ENCODE measurements at regions of chr2 and their contacts with region 1.

Region 1: DNA sequence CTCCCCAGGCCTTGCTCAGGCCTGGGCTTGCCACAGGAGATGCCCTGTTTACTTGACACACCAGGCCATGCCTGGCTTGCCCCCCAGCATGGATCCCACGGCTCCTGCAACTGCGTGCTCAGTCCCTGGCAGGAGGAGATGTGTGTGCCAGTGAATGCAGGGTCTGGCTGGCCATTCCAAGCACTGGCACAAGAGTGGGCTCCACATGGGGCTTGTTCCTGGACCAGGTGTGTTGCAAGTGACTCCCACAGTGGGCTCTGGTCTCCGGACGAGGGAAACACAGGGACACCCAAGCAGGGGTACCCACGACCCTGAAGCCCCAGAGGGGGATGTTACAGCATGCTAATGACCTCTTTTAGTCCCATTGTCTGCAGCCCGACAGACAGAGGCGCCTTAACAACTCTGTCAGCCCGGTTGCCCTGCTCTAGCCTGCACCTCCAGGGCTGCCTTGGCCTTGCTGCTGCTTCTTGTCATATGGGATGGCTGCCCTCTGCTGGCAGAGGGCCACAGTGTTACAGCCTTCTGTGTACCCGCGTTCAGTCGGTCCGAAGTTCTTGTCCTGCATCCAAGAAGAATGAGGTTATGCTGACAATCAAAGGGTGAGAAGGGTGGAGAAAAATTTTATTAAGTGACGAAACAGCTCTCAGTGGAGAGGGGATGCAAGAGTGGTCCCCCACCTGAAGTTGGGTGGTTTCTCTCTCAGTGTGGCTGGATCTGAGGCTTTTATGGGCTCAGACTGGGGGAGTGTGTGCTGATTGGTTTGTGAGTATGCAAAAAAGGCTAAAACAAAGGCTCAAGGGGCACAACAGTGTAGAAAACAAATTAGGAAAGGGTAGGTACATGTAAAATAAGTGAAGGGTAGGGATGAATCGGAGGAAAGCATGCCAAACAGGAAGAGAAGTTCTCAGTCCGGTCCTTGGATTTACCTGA is 180.4 kb downstream of the MBD5 start:
- DNase-seq: peak; percentile 87
- ATAC-seq: peak; percentile 100
- H3K4me3 ChIP-seq: no peak overlapping the region
- H3K27ac ChIP-seq: no peak overlapping the region
- H3K4me1 ChIP-seq: peaks cover 11% of the 10 kb centered on the region
- H3K27me3 ChIP-seq: no peaks in the 10 kb centered on the region
- CTCF ChIP-seq: peak; percentile 98
- EP300 ChIP-seq: no peak
- POLR2A ChIP-seq: no peak
- RAD21 ChIP-seq: peak; percentile 92

Region 2: GRCh38 chr2:146734042-146734820 is 1467.1 kb before region 1 on chr2:
- CTCF ChIA-PET with region 1: no interaction called
- POLR2A ChIA-PET with region 1: no interaction called
- in situ Hi-C with region 1: no loop called
- intact Hi-C with region 1: loop called (anchors 10 kb)
- DNase-seq: peak; percentile 62
- ATAC-seq: peak; percentile 92
- H3K4me3 ChIP-seq: no peak overlapping the region
- H3K27ac ChIP-seq: no peak overlapping the region
- H3K4me1 ChIP-seq: peaks cover 8% of the 10 kb centered on the region
- H3K27me3 ChIP-seq: no peaks in the 10 kb centered on the region
- CTCF ChIP-seq: peak; percentile 76
- EP300 ChIP-seq: no peak
- POLR2A ChIP-seq: no peak
- RAD21 ChIP-seq: peak; percentile 61; the same call in 1 of the 2 replicates

Region 3: GRCh38 chr2:147937744-147938349 is 263.5 kb before region 1 on chr2:
- CTCF ChIA-PET with region 1: interaction called, 69 read pairs
- POLR2A ChIA-PET with region 1: no interaction called
- in situ Hi-C with region 1: loop called (anchors 5 kb)
- intact Hi-C with region 1: loop called (anchors 1 kb)
- DNase-seq: peak; percentile 40
- ATAC-seq: peak; percentile 77
- H3K4me3 ChIP-seq: no peak overlapping the region
- H3K27ac ChIP-seq: no peak overlapping the region
- H3K4me1 ChIP-seq: peaks cover 10% of the 10 kb centered on the region
- H3K27me3 ChIP-seq: no peaks in the 10 kb centered on the region
- CTCF ChIP-seq: peak; percentile 80
- EP300 ChIP-seq: no peak
- POLR2A ChIP-seq: no peak
- RAD21 ChIP-seq: peak; percentile 78; the same call in 1 of the 2 replicates

Region 4: DNA sequence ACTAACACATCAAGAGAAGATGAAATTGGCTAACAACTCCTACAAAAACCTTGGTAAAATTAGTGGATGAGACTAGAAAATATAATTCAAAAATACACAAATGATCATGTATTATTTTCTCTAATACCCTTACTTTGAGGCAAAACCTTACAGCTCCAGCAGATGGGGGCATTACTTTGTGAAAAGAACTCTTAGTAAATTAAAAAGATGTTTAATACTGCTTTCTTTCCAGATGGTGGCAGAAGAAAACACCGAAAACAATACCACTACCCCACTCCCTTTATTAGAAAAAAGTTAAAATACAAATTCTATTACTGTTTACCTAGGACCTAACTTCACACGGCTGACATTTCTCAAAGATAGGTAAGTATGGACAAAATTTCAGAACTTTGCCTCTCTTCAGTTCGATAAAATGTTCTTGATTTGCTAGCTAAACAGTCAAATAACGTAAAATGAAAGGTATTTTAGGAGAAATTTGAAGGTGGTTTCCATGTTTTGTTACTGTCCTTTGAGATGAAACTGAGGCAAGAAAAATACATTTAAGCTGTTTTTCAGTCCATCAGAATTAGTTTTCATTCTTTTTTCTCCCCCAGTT is 211.4 kb before region 1 on chr2:
- CTCF ChIA-PET with region 1: interaction called, 26 read pairs
- POLR2A ChIA-PET with region 1: no interaction called
- in situ Hi-C with region 1: no loop called
- intact Hi-C with region 1: loop called (anchors 1 kb)
- DNase-seq: peak; percentile 47
- ATAC-seq: peak; percentile 70
- H3K4me3 ChIP-seq: no peak overlapping the region
- H3K27ac ChIP-seq: no peak overlapping the region
- H3K4me1 ChIP-seq: 0 out of 2 replicates have a peak, but pooled peaks cover 5% of the 10 kb centered on the region
- H3K27me3 ChIP-seq: no peaks in the 10 kb centered on the region
- CTCF ChIP-seq: peak; percentile 40
- EP300 ChIP-seq: no peak
- POLR2A ChIP-seq: no peak
- RAD21 ChIP-seq: peak; percentile 67

Region 5: GRCh38 chr2:148122788-148123187 is 78.6 kb before region 1 on chr2:
- CTCF ChIA-PET with region 1: no interaction called
- POLR2A ChIA-PET with region 1: no interaction called
- in situ Hi-C with region 1: no loop called
- intact Hi-C with region 1: no loop called
- DNase-seq: no peak
- ATAC-seq: no peak
- H3K4me3 ChIP-seq: no peak overlapping the region
- H3K27ac ChIP-seq: no peak overlapping the region
- H3K4me1 ChIP-seq: no peaks in the 10 kb centered on the region
- H3K27me3 ChIP-seq: no peaks in the 10 kb centered on the region
- CTCF ChIP-seq: no peak
- EP300 ChIP-seq: no peak
- POLR2A ChIP-seq: no peak
- RAD21 ChIP-seq: no peak

Region 6: GRCh38 chr2:148273158-148273691 is 71.9 kb after region 1 on chr2:
- CTCF ChIA-PET with region 1: no interaction called
- POLR2A ChIA-PET with region 1: no interaction called
- in situ Hi-C with region 1: no loop called
- intact Hi-C with region 1: no loop called
- DNase-seq: no peak
- ATAC-seq: peak; percentile 84
- H3K4me3 ChIP-seq: no peak overlapping the region
- H3K27ac ChIP-seq: no peak overlapping the region
- H3K4me1 ChIP-seq: peaks cover 19% of the 10 kb centered on the region
- H3K27me3 ChIP-seq: no peaks in the 10 kb centered on the region
- CTCF ChIP-seq: no peak
- EP300 ChIP-seq: no peak
- POLR2A ChIP-seq: no peak
- RAD21 ChIP-seq: no peak

Measured in HepG2 (cell line).